SK-N-SH (cell line): ENCODE measurements at regions of chr1 and their contacts with region 1.

Region 1: GRCh38 chr1:231866392-231867331 is 240.1 kb downstream of the DISC1 start:
- DNase-seq: peak; percentile 59
- H3K4me3 ChIP-seq: no peak overlapping the region; a peak in 1 of 4 replicates
- H3K27ac ChIP-seq: no peak overlapping the region
- H3K4me1 ChIP-seq: peaks cover 10 to 11% of the 10 kb centered on the region in 2 experiments; a peak in 3 of 4 replicates
- H3K27me3 ChIP-seq: no peaks in the 10 kb centered on the region
- CTCF ChIP-seq: peak; percentile 97
- EP300 ChIP-seq: no peak
- RAD21 ChIP-seq: peak; percentile 97

Region 2: DNA sequence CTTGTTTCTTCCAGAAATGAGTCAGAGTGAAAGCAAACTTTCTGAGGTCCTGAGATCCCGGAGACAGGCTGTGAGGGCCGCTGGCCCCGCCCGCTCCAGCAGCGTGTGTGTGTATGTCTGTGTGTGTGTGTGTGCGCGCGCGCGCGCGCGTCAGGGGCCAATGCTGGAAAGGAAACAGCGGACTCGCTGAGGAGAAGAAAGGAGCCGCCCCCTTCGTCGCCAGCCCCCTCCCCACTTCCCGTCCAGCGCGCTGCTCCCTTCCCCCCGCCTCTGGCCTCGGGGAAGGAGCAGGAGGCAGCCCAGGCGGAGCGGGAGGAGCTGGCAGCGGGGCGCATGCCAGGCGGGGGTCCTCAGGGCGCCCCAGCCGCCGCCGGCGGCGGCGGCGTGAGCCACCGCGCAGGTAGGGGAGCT is 240.1 kb before region 1 on chr1 and contains the start of gene DISC1:
- CTCF ChIA-PET with region 1: no interaction called
- POLR2A ChIA-PET with region 1: no interaction called
- DNase-seq: peak; percentile 93
- H3K4me3 ChIP-seq: peak within 1 kb of the TSS; percentile 71 to 74
- H3K27ac ChIP-seq: peak within 1 kb of the TSS; percentile 22 to 36; a peak in 1 of 4 replicates
- H3K4me1 ChIP-seq: peaks cover 0 to 14% of the 10 kb centered on the region in 2 experiments; a peak in 1 of 4 replicates
- H3K27me3 ChIP-seq: no peaks in the 10 kb centered on the region
- CTCF ChIP-seq: no peak
- EP300 ChIP-seq: no peak
- RAD21 ChIP-seq: no peak; the same call in 1 of the 2 replicates
- polyA plus RNA-seq, gene DISC1: 1.7 and 2.1 TPM in 2 replicates

Region 3: DNA sequence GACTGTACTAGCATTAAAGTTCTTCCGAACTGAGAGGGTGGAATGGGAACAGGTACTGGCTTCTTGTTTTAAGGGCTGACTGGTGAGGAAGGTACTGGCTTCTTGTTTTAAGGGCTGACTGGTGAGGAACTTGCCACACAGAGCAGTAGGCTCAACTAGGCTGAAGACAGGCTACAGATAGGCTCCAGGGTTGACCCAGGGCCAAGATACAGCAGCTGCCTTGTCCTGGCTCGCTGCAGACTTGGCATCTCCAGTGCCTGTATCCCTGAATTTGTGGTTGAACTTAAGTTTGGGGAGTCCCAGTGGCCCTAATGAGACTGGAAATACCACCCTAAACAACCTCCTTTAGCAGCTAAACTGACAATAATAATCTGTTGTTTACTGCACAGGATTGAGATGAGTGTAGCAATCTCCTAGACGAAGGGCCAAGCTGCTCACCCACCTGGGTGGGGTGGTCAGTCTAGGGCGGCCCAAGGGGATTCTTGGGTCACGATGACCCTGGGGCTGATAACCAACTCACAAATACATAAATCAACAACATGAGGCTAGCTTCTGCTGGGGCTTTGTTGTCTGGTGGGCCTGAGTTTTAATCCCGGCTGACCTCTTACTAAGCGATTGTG is 13.0 kb before region 1 on chr1:
- CTCF ChIA-PET with region 1: interaction called, 43 read pairs
- POLR2A ChIA-PET with region 1: no interaction called
- DNase-seq: no peak
- H3K4me3 ChIP-seq: no peak overlapping the region
- H3K27ac ChIP-seq: no peak overlapping the region
- H3K4me1 ChIP-seq: peaks cover 0 to 2% of the 10 kb centered on the region in 2 experiments; a peak in 1 of 4 replicates
- H3K27me3 ChIP-seq: no peaks in the 10 kb centered on the region
- CTCF ChIP-seq: no peak
- EP300 ChIP-seq: no peak
- RAD21 ChIP-seq: no peak

Region 4: DNA sequence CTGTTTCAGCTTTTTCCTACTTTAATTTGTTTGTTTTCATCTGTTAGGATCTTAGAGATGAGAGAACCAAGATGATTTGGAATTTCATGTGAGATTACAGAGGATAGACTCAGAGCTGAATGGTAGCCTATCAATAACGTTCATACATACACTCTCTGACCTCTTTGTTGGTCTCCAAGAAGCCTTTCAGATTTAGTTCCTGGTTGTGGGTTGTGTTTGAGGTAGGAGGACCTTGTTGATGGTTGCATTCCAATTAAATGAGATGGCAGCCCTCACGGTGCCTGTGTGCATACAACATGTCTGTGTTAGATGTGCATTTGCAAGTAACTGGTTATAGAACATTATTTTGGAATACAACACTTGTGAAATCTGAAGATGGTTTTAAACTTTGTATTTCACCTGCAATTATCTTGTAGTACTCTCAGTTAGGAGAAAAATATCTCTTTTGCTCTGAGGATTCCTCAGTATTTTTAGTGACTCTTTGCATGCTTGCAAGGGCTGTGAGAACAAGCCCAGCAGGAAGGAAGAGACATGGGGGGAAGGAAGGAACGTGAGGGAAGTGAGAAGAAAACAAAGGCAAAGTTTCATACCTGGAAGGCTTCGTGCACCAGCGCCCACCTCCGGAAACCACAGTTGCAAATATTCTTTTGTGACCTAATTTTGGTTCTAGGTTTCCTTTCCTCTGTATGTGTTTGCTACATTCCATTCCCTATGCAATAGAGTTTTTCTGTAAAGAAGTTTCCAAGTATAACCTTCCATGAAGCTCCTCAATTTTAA is 51.8 kb after region 1 on chr1:
- CTCF ChIA-PET with region 1: interaction called, 10 read pairs
- POLR2A ChIA-PET with region 1: no interaction called
- DNase-seq: no peak
- H3K4me3 ChIP-seq: no peak overlapping the region
- H3K27ac ChIP-seq: peak overlapping the region in 1 of 2 experiments; percentile 91; a peak in 1 of 4 replicates
- H3K4me1 ChIP-seq: peaks cover 0 to 18% of the 10 kb centered on the region in 2 experiments; a peak in 2 of 4 replicates
- H3K27me3 ChIP-seq: no peaks in the 10 kb centered on the region
- CTCF ChIP-seq: no peak
- EP300 ChIP-seq: no peak
- RAD21 ChIP-seq: no peak

Region 5: DNA sequence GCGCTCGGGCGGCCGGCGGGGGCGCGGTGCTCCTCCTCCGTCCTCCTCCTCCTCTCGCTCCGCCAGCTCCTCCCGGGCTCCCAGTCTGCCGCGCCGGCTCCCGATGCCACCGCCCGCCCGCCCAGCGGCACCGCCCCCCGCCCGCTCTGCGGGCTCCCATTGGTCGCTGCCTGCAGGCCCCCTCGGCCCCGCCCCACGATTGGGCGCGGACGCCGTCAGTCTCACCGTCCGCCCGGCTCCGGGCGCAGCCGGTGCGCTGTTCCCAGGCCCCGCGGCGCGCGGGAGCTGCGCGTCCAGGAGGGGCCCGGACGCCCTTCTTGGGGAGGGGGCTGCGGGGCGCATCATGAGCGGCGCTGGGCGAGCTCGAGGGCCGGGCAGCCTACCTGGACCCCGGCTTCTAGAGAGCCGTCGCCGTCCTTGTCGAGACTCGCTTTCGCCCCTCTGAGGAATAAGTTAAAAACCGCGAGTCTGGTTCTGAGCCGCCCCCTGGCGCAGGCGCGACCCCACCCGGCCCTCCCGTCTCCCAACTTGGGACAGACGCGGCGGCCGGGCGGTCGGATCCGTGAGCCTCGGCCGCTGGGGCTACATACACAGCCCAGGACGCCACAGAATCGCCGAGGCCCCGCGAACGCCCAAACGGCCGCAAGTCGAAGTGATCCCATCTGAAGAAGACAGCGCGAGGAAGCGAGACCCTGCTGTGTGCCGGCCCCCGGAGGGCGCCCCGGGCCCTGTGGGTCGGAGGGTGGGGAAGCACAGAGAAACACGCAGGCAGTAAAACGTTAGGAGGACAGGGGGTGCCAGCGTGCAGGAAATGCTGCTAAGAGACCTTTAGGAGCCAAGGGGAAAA is 763.6 kb after region 1 on chr1 and contains the start of gene SIPA1L2:
- CTCF ChIA-PET with region 1: interaction called, 49 read pairs
- POLR2A ChIA-PET with region 1: no interaction called
- DNase-seq: peak; percentile 100
- H3K4me3 ChIP-seq: peak within 1 kb of the TSS; percentile 68
- H3K27ac ChIP-seq: peak within 1 kb of the TSS in 1 of 2 experiments; percentile 58; a peak in 2 of 4 replicates
- H3K4me1 ChIP-seq: peaks cover 0 to 8% of the 10 kb centered on the region in 2 experiments; a peak in 2 of 4 replicates
- H3K27me3 ChIP-seq: peaks cover 9% of the 10 kb centered on the region; the same call in 1 of the 2 replicates
- CTCF ChIP-seq: peak; percentile 47
- EP300 ChIP-seq: no peak
- RAD21 ChIP-seq: peak; percentile 77
- polyA plus RNA-seq, gene SIPA1L2: 0.48 and 0.55 TPM in 2 replicates